Activated CD8-positive, alpha-beta T cell treated with anti-CD3 and anti-CD28 coated beads for 36 hours (primary cell): ENCODE measurements at regions of chr7 and their contacts with region 1.

Region 1: GRCh38 chr7:111098011-111098925 is 7.3 kb downstream of the LRRN3 start:
- DNase-seq: peak; percentile 76
- ATAC-seq: peak; percentile 79
- H3K4me3 Mint-ChIP-seq: peak overlapping the region; percentile 66
- H3K27ac Mint-ChIP-seq: peak overlapping the region; percentile 94
- H3K4me1 Mint-ChIP-seq: peaks cover 66% of the 10 kb centered on the region
- H3K27me3 Mint-ChIP-seq: no peaks in the 10 kb centered on the region
- CTCF ChIP-seq: peak; percentile 73

Region 2: GRCh38 chr7:110590415-110590814 is 507.9 kb before region 1 on chr7:
- CTCF ChIA-PET with region 1: interaction called, 10 read pairs
- POLR2A ChIA-PET with region 1: no interaction called
- intact Hi-C with region 1: loop called (anchors 5 kb)
- DNase-seq: peak; percentile 33
- ATAC-seq: no peak
- H3K4me3 Mint-ChIP-seq: no peak overlapping the region
- H3K27ac Mint-ChIP-seq: no peak overlapping the region
- H3K4me1 Mint-ChIP-seq: no peaks in the 10 kb centered on the region
- H3K27me3 Mint-ChIP-seq: no peaks in the 10 kb centered on the region
- CTCF ChIP-seq: no peak

Region 3: DNA sequence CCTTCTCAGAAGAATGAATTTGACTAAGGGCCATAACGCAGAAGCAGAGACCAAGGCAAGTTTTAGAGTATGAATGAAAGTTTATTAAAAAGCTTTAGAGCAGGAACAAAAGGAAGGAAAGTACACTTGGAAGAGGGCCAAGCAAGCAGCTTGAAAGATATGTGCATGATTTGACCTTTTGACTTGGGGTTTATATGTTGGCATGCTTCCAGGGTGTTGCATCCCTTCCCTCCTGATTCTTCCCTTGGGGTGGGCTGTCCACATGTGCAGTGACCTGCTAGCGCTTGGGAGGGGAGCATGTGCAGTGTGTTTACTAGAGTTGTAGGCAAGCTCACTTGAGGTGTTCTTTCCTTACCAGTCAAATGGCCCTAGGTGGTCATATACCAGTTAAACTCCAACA is 45.2 kb before region 1 on chr7:
- CTCF ChIA-PET with region 1: no interaction called
- POLR2A ChIA-PET with region 1: no interaction called
- intact Hi-C with region 1: no loop called
- DNase-seq: no peak
- ATAC-seq: no peak
- H3K4me3 Mint-ChIP-seq: no peak overlapping the region
- H3K27ac Mint-ChIP-seq: no peak overlapping the region
- H3K4me1 Mint-ChIP-seq: peaks cover 37% of the 10 kb centered on the region
- H3K27me3 Mint-ChIP-seq: no peaks in the 10 kb centered on the region
- CTCF ChIP-seq: no peak

Region 4: GRCh38 chr7:111068618-111069017 is 29.6 kb before region 1 on chr7:
- CTCF ChIA-PET with region 1: no interaction called
- POLR2A ChIA-PET with region 1: no interaction called
- intact Hi-C with region 1: no loop called
- DNase-seq: no peak
- ATAC-seq: no peak
- H3K4me3 Mint-ChIP-seq: no peak overlapping the region
- H3K27ac Mint-ChIP-seq: no peak overlapping the region
- H3K4me1 Mint-ChIP-seq: peaks cover 43% of the 10 kb centered on the region
- H3K27me3 Mint-ChIP-seq: no peaks in the 10 kb centered on the region
- CTCF ChIP-seq: no peak

Region 5: DNA sequence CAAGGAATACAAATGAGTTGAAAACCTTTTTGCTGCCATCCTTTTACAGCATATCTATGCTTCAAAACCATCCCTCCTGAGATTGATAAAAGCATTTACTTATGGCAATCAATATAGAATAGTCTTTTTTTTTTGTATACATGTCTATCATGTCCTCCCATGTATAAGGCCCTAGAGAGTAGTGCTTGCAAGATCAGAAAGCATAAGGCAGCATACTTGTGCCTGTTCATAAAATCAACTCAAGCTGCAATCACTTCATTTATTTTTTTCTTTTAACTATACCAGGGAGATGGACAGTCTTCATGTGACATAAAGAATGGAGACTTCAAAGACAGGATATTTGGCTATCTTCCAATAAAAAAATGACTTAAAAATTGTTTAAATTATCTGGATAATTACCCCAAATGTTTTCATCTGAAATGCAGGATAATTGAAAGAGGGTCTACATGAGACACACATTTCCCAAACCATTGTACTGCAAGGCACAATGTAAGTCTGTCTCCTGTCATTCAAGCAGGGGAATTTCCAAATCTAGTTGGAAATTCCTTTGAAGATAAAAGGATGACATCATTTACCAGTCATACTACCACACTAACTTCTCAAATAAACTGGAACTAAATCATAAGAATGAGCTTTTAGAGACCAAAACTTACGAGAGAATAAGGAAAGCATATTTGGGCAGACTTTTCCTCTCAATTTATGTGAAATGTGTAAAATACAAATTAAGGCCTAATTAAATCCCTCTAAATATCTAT is 15.2 kb after region 1 on chr7:
- CTCF ChIA-PET with region 1: interaction called, 17 read pairs
- POLR2A ChIA-PET with region 1: interaction called, 3 read pairs
- intact Hi-C with region 1: no loop called
- DNase-seq: no peak
- ATAC-seq: peak; percentile 76
- H3K4me3 Mint-ChIP-seq: no peak overlapping the region
- H3K27ac Mint-ChIP-seq: peak overlapping the region; percentile 83
- H3K4me1 Mint-ChIP-seq: peaks cover 47% of the 10 kb centered on the region
- H3K27me3 Mint-ChIP-seq: no peaks in the 10 kb centered on the region
- CTCF ChIP-seq: no peak

Region 6: DNA sequence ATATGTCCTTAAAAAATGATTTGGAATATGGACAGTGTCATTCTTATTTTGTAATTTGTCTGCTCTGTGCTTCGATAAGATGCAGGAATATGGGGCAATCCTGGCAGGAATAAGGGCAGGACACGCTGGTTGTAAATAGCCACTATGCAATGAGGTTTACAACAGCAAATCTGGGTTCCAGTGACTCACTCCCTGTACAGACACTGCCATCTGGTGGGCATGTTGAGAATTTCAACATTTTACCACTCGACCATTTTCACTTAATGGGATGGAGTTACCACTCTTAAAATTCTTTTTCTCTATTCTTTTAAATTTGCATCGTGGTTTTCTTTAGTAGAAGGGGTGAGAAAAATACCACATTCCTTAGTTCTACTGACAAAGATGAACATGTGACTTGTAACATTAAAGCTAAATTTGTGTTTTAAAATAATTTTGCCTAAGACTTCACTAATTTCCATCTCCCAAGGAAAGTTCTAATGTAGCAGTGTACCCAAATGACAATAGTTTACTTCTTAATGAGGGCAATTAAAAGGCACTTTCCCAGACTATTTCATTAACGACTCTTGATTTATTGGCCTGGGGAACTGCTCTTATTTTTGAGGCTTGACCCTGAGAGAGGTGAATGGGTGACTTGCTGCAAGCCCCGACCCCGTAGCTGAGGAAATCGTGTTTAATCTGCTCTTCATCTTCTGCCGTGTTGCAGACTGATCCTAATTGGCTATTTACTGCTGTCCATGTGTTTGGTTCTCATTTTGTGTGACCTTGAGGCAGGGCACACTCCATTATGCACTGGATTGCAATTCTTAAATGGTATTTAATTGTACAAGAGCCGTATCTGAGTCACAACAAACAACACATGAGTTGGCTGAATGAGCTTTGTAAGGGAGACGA is 637.6 kb after region 1 on chr7:
- CTCF ChIA-PET with region 1: no interaction called
- POLR2A ChIA-PET with region 1: no interaction called
- intact Hi-C with region 1: loop called (anchors 10 kb)
- DNase-seq: peak; percentile 60
- ATAC-seq: peak; percentile 56
- H3K4me3 Mint-ChIP-seq: no peak overlapping the region
- H3K27ac Mint-ChIP-seq: no peak overlapping the region
- H3K4me1 Mint-ChIP-seq: no peaks in the 10 kb centered on the region
- H3K27me3 Mint-ChIP-seq: peaks cover 1% of the 10 kb centered on the region
- CTCF ChIP-seq: peak; percentile 89